PC-3 (cell line): ENCODE measurements at regions of chr6 and their contacts with region 1.

Region 1: DNA sequence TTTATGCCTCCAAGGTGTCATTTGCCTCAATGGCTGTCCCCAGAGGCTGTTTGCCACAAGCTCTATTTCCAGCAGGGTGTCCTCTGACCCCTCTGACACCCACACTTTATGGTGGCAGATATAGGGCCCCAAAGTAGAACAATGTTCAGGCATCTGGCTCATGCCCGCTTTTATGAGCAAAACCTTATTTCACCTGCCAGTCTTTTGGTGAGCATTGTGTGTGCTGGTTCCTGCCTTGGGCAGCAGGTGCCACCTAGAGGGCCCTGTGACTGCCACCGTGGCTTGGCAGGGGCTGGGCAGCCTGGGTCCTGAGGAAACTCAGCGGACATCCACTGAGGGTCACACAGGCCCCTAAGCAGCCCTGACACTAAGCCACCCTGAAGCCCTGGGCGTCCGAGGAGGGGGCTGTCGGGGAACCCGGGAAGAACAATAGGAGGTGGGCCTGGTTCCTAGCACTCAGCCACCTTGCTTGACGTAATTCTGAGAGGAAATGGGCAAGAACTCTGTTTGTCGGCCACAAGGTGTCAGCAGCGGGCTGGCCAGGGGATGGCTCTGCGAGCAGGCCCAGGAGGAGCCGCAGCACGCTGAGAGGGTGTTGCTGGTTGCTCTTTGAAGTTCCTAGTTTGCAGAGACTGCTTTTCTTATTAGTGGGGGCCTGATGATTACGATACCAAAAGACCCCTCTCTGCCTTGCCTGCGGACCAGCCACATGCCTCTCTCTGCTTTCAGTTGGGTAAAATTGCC is 148.9 kb downstream of the SCML4 start:
- DNase-seq: peak; percentile 67
- ATAC-seq: peak; percentile 97
- H3K4me3 ChIP-seq: peak overlapping the region; percentile 61; the same call in 1 of the 2 replicates
- H3K27ac ChIP-seq: no peak overlapping the region
- H3K4me1 ChIP-seq: no peaks in the 10 kb centered on the region
- H3K27me3 ChIP-seq: no peaks in the 10 kb centered on the region
- CTCF ChIP-seq: peak; percentile 87

Region 2: DNA sequence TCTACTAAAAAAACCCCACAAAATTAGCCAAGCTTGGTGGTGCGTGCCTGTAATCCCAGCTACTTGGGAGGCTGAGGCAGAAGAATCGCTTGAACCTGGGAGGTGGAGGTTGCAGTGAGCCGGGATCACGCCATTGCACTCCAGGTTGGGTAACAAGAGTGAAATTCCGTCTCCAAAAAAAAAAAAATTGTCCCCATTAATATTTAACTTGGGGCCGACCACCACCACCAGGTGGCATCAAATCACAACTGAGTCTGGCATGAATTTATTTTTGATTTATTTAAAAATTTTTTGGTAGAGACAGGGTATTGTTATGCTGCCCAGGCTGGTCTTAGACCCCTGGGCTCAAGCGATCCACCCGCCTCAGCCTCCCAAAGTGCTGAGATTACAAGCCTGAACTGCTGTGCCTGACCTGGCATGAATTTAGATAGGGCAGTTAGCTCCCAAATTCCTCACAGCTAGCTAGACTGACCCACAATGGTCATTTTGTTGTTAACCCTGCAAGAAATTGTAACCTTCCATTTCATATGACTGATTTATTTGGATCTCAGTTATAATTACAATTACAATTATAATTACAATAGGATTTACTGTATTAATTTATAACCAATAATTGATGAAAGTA is 542.7 kb before region 1 on chr6:
- CTCF ChIA-PET with region 1: no interaction called
- POLR2A ChIA-PET with region 1: no interaction called
- intact Hi-C with region 1: loop called (anchors 5 kb)
- DNase-seq: peak; percentile 53
- ATAC-seq: no peak
- H3K4me3 ChIP-seq: no peak overlapping the region
- H3K27ac ChIP-seq: no peak overlapping the region
- H3K4me1 ChIP-seq: no peaks in the 10 kb centered on the region
- H3K27me3 ChIP-seq: no peaks in the 10 kb centered on the region
- CTCF ChIP-seq: peak; percentile 54

Region 3: DNA sequence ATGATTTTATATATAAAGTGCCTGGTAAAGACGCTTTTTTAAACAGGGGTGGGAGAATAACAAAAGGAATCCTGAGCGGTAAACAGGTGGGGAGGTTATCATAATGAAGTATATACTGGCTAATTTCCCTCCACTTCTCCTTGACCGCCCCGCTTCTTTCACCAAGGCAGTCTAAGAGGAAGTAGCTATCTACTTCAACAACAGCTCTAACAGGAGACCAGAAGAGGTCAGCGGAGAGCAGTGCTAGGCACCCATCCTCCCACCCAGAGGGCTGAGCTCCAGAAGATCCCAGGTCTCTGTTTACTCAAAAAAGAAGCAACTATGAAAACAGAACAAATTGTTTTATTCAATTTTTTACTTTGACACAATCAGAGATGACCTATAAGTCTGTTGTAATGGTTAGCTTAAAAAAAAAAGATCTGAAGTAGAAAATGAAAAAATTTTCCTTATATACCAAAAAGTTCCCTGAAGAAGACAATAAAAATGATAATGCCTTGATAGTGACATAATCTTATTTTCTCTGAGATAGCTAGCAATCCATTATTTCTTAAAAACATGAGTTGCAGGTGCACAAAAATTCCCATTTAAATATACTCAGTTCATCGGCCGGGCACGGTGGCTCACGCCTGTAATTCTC is 356.9 kb before region 1 on chr6:
- CTCF ChIA-PET with region 1: interaction called, 3 read pairs
- POLR2A ChIA-PET with region 1: no interaction called
- intact Hi-C with region 1: loop called (anchors 5 kb)
- DNase-seq: peak; percentile 53
- ATAC-seq: peak; percentile 78
- H3K4me3 ChIP-seq: no peak overlapping the region
- H3K27ac ChIP-seq: no peak overlapping the region
- H3K4me1 ChIP-seq: no peaks in the 10 kb centered on the region
- H3K27me3 ChIP-seq: no peaks in the 10 kb centered on the region
- CTCF ChIP-seq: peak; percentile 67

Region 4: DNA sequence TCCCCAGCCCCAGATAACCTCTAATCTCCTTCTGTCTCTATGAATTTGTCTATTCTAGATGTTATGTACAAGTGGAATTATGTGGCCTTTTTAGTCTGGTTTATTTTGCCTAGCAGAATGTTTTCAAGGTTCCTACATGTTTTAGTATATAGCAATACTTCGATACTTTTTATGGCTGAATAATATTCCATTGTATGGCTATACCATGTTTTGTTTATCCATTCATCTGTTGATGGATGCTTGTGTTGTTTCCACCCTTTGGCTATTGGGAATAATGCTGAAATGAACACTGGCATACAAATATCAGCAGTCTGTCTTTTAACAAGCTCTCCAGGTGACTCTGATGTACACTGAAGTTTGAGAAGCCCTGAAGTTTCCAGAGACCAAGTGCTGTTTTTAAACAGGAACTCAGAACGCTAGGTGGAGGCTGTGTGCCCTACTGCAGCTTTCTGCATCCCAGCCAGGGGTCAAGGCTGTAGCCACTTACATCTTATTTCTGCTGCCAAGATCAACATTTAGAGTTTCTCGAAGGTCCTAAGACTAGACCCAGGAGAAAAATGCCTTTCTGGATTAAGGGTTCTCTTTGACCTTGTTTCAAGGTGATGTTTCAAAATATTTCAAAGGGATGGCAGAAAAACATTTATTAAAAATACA is 62.3 kb before region 1 on chr6:
- CTCF ChIA-PET with region 1: no interaction called
- POLR2A ChIA-PET with region 1: no interaction called
- intact Hi-C with region 1: loop called (anchors 2 kb)
- DNase-seq: no peak
- ATAC-seq: 0 out of 2 replicates have a peak, but pooled peaks have one; percentile 29
- H3K4me3 ChIP-seq: no peak overlapping the region
- H3K27ac ChIP-seq: no peak overlapping the region
- H3K4me1 ChIP-seq: no peaks in the 10 kb centered on the region
- H3K27me3 ChIP-seq: no peaks in the 10 kb centered on the region
- CTCF ChIP-seq: no peak; the same call in 1 of the 2 replicates

Region 5: GRCh38 chr6:107847844-107848802 is 173.0 kb after region 1 on chr6:
- CTCF ChIA-PET with region 1: no interaction called
- POLR2A ChIA-PET with region 1: no interaction called
- intact Hi-C with region 1: loop called (anchors 1 kb)
- DNase-seq: peak; percentile 77
- ATAC-seq: peak; percentile 97
- H3K4me3 ChIP-seq: peak overlapping the region; percentile 63
- H3K27ac ChIP-seq: no peak overlapping the region
- H3K4me1 ChIP-seq: 0 out of 2 replicates have a peak, but pooled peaks cover 4% of the 10 kb centered on the region
- H3K27me3 ChIP-seq: no peaks in the 10 kb centered on the region; the same call in 1 of the 2 replicates
- CTCF ChIP-seq: peak; percentile 76